Mammary epithelial cell (primary cell): ENCODE measurements at regions of chr18 and their contacts with region 1.

Region 1: GRCh38 chr18:9474983-9475642 is at the start of gene RALBP1:
- DNase-seq: peak; percentile 100
- H3K4me3 ChIP-seq: peak within 1 kb of the TSS; percentile 67 to 98 (median 93)
- H3K27ac ChIP-seq: peak within 1 kb of the TSS; percentile 91
- H3K4me1 ChIP-seq: peaks cover 13% of the 10 kb centered on the region
- H3K27me3 ChIP-seq: no peaks in the 10 kb centered on the region
- CTCF ChIP-seq: peak in 1 of 2 donors; percentile 30
- total RNA-seq, gene RALBP1: 59.1 to 72.2 TPM

Region 2: GRCh38 chr18:9334329-9334972 is 140.7 kb before region 1 on chr18 and contains the start of gene TWSG1:
- CTCF ChIA-PET with region 1: no interaction called
- dilution Hi-C with region 1: no loop called
- in situ Hi-C with region 1: no loop called
- intact Hi-C with region 1: loop called (anchors 1 kb)
- DNase-seq: peak; percentile 91
- H3K4me3 ChIP-seq: peak within 1 kb of the TSS; percentile 64 to 76 (median 65)
- H3K27ac ChIP-seq: peak within 1 kb of the TSS; percentile 63
- H3K4me1 ChIP-seq: peaks cover 10% of the 10 kb centered on the region
- H3K27me3 ChIP-seq: no peaks in the 10 kb centered on the region
- CTCF ChIP-seq: peak in 1 of 2 donors; percentile 55
- total RNA-seq, gene TWSG1: 41.0 to 63.8 TPM

Region 3: DNA sequence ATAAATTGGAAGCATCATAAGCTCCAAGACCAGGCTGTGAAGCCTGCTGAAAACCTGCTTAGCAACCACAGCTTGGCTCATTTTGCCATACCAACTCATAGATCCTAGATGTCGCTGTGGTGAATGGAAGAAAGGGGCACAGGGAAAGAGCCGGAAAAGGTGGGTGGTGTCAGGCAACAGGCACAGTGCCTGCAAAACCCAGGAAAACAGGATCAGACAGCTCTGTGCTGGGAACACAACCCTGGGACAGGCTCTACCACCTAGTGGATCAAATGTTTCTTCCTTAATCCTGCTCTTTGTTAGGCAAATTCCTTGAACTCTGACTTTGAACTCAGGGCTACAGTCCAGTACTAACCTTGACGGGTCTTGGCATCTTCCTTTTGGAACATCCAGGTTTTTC is 108.9 kb before region 1 on chr18:
- CTCF ChIA-PET with region 1: no interaction called
- dilution Hi-C with region 1: no loop called
- in situ Hi-C with region 1: loop called in 1 of 2 experiments (anchors 25 kb)
- intact Hi-C with region 1: no loop called
- DNase-seq: peak; percentile 84
- H3K4me3 ChIP-seq: no peak overlapping the region
- H3K27ac ChIP-seq: no peak overlapping the region
- H3K4me1 ChIP-seq: peaks cover 10% of the 10 kb centered on the region
- H3K27me3 ChIP-seq: no peaks in the 10 kb centered on the region
- CTCF ChIP-seq: peak; percentile 45 to 69

Region 4: GRCh38 chr18:9428301-9428706 is 46.8 kb before region 1 on chr18:
- CTCF ChIA-PET with region 1: no interaction called
- dilution Hi-C with region 1: loop called (anchors 5 kb)
- in situ Hi-C with region 1: no loop called
- intact Hi-C with region 1: loop called (anchors 2 kb)
- DNase-seq: no peak
- H3K4me3 ChIP-seq: no peak overlapping the region
- H3K27ac ChIP-seq: peak overlapping the region; percentile 83
- H3K4me1 ChIP-seq: peaks cover 24% of the 10 kb centered on the region
- H3K27me3 ChIP-seq: no peaks in the 10 kb centered on the region
- CTCF ChIP-seq: no peak

Region 5: DNA sequence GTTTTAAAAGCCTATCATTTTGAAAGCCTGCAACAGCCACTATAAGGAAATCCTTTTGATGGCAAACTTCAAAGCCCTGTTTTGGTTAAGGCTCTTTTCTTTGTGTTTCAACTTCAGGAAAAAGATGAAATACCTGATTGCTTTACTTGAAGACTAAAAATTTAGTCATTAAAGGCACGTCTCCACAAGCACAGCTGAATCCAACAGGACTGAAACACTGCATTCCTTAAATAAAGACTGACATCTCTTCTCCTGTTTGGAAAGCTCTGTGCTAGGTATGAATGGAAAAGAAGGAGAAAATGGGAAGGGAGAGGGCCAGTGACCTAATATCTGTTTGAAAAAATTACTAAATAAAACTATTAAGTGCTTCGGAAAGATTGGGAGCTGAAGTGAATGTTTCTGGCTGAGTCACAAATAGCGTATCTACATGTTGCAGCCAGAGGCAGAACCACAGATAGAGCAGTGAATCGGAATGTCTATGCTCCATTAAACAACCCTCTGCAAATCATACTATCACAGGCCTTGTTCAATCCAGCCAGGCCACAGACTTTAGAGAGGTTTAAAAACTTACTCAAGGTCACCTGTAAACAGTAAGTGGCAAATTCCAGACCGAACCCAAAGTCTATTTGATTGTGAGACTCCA is 20.9 kb before region 1 on chr18:
- CTCF ChIA-PET with region 1: no interaction called
- dilution Hi-C with region 1: no loop called
- in situ Hi-C with region 1: no loop called
- intact Hi-C with region 1: loop called (anchors 2 kb)
- DNase-seq: peak; percentile 59
- H3K4me3 ChIP-seq: no peak overlapping the region
- H3K27ac ChIP-seq: peak overlapping the region; percentile 27
- H3K4me1 ChIP-seq: peaks cover 12% of the 10 kb centered on the region
- H3K27me3 ChIP-seq: no peaks in the 10 kb centered on the region
- CTCF ChIP-seq: no peak